Activated CD8-positive, alpha-beta T cell treated with anti-CD3 and anti-CD28 coated beads, Interleukin-2, amount 10 ng/mL, durations not matched to agents 7 days and 5 days (primary cell): ENCODE measurements at regions of chr1 and their contacts with region 1.

Region 1: DNA sequence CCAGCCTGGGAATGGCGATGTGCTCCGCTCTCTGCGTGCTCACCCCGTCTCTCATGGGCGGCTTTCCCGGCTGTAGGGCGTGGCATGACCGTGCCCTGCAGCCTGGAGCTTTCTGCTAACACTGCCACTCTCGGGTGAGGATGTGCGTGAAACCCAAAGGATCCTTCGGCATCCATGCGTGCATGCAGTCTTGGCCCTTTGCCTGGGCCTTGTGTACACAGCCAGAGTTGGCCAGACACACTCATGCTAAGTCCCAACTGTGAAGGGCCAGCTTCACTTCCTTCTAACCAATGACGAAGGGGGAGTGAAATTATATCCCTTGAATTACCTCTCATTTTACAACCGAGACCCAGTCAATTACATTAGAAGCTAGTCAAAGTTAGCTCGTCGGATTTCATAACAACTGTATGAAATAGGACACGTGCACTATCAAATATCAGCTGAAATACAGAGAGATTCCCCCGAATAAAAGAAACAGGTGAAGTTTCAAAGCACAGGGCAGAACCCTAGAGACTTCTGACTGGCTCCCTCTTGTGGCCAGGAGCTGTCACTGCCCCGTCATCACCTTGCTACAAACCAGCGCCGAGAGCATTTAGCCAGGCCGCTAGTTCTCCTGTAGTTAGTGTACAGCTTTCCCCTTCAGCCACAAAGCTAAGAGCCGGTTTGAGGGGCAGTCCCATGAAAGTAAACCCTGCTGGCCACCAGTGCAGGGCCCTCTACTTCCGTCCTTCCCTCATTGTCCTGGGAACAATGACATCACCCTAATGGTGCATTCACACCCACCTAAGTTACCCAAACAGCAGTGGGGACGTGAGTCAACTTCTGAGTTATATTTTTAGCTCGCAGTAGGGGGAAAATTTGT is 63.4 kb upstream of the COA6 start:
- DNase-seq: peak; percentile 81
- ATAC-seq: peak; percentile 84
- H3K4me3 Mint-ChIP-seq: no peak overlapping the region
- H3K27ac Mint-ChIP-seq: no peak overlapping the region
- H3K4me1 Mint-ChIP-seq: peaks cover 13% of the 10 kb centered on the region
- H3K27me3 Mint-ChIP-seq: no peaks in the 10 kb centered on the region

Region 2: DNA sequence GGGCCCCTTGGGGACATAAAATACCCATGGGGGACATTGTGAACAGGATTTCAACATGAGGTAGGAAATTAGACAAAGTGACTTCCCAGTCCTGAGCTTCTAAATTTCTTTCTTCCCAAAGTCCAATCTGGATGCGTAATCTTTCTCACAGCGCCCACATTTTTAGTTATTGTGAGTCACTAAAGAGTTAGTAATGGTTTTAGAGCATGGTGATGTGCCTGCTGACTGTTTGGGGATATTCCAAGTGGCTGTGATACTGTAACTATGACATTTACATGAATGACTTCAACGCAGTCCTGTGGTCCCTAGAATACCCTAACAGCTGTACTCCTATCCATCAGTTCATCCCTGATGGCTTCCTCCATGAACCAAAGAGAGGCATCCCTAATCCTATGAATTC is 160.6 kb before region 1 on chr1:
- CTCF ChIA-PET with region 1: interaction called, 24 read pairs
- POLR2A ChIA-PET with region 1: no interaction called
- DNase-seq: no peak
- ATAC-seq: no peak
- H3K4me3 Mint-ChIP-seq: no peak overlapping the region
- H3K27ac Mint-ChIP-seq: no peak overlapping the region
- H3K4me1 Mint-ChIP-seq: no peaks in the 10 kb centered on the region
- H3K27me3 Mint-ChIP-seq: peaks cover 41% of the 10 kb centered on the region

Region 3: DNA sequence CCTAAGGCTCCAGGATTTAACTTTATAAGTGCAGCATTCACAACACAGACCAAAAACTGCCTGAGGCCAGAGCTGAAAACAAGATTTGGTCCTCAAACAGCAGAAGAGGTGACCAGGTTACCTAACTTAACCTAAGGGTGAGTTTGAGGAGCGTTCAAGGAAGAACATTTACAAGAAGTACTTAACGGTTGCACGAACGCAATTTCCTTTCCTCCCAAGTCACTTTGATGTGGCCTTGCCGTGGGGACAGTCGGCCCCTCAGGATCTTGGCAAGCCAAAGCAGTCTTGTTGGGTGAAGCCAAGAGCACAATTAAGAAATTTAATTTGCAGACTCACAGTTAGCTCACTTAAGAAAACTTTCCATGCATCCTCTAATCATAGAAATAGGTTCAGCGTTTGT is 139.2 kb before region 1 on chr1:
- CTCF ChIA-PET with region 1: interaction called, 19 read pairs
- POLR2A ChIA-PET with region 1: no interaction called
- DNase-seq: peak; percentile 71
- ATAC-seq: peak; percentile 78
- H3K4me3 Mint-ChIP-seq: peak overlapping the region; percentile 50
- H3K27ac Mint-ChIP-seq: peak overlapping the region; percentile 87
- H3K4me1 Mint-ChIP-seq: peaks cover 73% of the 10 kb centered on the region
- H3K27me3 Mint-ChIP-seq: no peaks in the 10 kb centered on the region

Region 4: GRCh38 chr1:234230414-234230862 is 79.4 kb before region 1 on chr1:
- CTCF ChIA-PET with region 1: interaction called, 20 read pairs
- POLR2A ChIA-PET with region 1: no interaction called
- DNase-seq: peak; percentile 71
- ATAC-seq: peak; percentile 94
- H3K4me3 Mint-ChIP-seq: peak overlapping the region; percentile 52
- H3K27ac Mint-ChIP-seq: peak overlapping the region; percentile 72
- H3K4me1 Mint-ChIP-seq: peaks cover 65% of the 10 kb centered on the region
- H3K27me3 Mint-ChIP-seq: peaks cover 11% of the 10 kb centered on the region

Region 5: DNA sequence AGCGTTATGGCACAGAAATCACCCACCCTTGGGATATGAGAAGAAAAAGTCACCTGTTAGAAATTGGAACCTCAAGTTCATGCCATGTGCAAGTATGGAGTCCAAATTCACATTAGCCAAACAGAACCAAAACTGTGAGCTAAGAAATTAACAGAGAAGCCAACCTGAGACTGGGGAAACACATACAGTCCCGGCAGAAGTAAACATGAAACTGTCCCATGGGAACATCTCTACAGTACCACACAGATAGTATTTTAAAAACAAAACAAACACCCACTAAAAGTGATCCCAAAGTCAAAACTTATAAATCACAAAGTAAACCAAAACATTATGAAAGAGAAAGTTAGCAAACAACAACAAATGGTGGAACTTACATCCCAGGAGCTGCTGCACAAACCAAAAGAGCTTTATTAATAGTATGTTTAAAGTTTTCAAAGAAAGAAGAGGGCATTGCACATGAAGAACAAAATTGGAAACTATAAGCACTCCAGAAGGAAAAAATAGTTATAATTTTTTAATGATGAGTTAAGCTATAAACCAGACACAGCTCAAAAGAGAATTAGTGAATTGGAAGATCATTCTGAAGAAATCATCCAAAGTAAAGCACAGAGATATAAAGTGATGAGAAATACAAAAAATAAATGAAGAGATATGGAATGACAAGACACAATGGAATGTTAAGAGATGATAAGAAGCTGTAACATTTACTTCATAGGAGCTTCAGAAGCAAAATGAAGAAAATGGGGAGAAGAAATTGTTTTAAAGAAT is 20.1 kb before region 1 on chr1:
- CTCF ChIA-PET with region 1: interaction called, 17 read pairs
- POLR2A ChIA-PET with region 1: no interaction called
- DNase-seq: no peak
- ATAC-seq: no peak
- H3K4me3 Mint-ChIP-seq: no peak overlapping the region
- H3K27ac Mint-ChIP-seq: no peak overlapping the region
- H3K4me1 Mint-ChIP-seq: no peaks in the 10 kb centered on the region
- H3K27me3 Mint-ChIP-seq: no peaks in the 10 kb centered on the region

Region 6: DNA sequence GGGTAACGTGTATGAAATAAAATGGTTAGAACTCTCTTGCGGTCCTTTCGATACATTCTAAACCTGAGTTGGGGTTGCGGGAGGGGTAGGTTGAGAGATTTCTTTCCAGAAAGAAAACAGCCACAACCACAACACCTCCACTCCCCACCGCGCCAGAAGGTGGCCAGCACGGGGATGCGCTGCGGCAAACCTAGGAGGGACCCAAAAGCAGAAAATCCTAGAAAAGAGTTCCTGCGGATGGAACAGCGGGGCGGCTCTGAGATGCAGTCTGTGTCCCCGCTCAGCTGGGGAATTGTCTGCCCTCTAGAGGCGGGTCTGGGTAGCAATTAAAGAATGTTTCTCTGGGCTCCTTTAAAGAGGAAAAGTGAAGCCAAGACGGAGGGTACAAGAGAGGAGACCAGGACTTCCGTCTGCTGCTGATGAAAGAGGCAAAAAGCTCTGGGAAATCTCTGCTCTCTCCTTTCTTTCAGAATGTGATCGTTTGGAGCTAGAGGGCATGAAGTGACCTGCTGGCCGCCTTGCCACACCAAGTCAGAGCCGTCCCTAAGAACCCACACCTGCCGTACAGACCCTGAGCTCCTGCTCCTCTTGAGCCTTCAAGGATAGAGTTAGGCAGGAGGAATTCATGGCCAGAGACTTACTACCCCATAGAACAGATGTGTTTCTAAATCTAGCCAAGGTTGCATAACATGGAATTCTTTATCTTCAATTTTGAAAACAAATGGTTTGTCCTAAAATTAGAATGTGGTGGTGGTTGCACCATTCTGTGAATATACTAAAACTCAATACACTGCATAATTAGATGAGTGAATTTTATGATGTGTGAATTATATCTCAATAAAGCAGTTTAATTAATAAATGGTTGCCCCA is 16.9 kb after region 1 on chr1:
- CTCF ChIA-PET with region 1: interaction called, 30 read pairs
- POLR2A ChIA-PET with region 1: no interaction called
- DNase-seq: peak; percentile 77
- ATAC-seq: peak; percentile 92
- H3K4me3 Mint-ChIP-seq: peak overlapping the region; percentile 64
- H3K27ac Mint-ChIP-seq: no peak overlapping the region
- H3K4me1 Mint-ChIP-seq: peaks cover 26% of the 10 kb centered on the region
- H3K27me3 Mint-ChIP-seq: peaks cover 5% of the 10 kb centered on the region

Region 7: GRCh38 chr1:234409328-234409727 is 99.5 kb after region 1 on chr1:
- CTCF ChIA-PET with region 1: no interaction called
- POLR2A ChIA-PET with region 1: no interaction called
- DNase-seq: no peak
- ATAC-seq: no peak
- H3K4me3 Mint-ChIP-seq: no peak overlapping the region
- H3K27ac Mint-ChIP-seq: no peak overlapping the region
- H3K4me1 Mint-ChIP-seq: peaks cover 3% of the 10 kb centered on the region
- H3K27me3 Mint-ChIP-seq: no peaks in the 10 kb centered on the region